Caco-2 (cell line): ENCODE measurements at regions of chr1 and their contacts with region 1.

Region 1: GRCh38 chr1:180154325-180155181 is at the start of gene QSOX1:
- DNase-seq: peak; percentile 83
- H3K4me3 ChIP-seq: peak within 1 kb of the TSS; percentile 79
- H3K4me3 Mint-ChIP-seq: peak within 1 kb of the TSS; percentile 92
- H3K27ac Mint-ChIP-seq: peak within 1 kb of the TSS; percentile 87
- H3K4me1 ChIP-seq: peaks cover 46% of the 10 kb centered on the region
- H3K4me1 Mint-ChIP-seq: peaks cover 36% of the 10 kb centered on the region
- H3K27me3 ChIP-seq: no peaks in the 10 kb centered on the region
- H3K27me3 Mint-ChIP-seq: peaks cover 10% of the 10 kb centered on the region
- CTCF ChIP-seq: peak in 1 of 2 experiments; percentile 33
- total RNA-seq, gene QSOX1: 12.1 and 17.0 TPM in 2 replicates

Region 2: DNA sequence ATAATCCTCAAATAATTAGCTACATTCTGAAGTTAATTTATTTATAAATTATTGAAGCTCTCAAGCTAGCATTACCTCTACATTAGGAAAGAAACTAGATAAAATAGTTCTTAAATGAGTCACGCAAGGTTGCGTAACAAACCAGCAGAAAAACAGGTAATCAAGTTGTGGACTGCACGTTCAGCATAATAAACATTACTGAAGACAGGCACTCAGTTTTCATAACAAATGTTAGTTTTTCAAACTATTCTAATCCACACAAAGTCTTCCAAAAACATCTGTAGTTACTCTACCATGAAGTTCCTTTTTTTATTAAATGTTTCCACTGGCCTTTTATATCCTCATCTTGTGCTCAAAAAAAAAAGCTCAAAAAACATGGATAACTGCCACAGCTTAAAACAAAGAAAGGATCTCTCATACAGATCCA is 278.3 kb before region 1 on chr1:
- CTCF ChIA-PET with region 1: interaction called, 3 read pairs
- POLR2A ChIA-PET with region 1: no interaction called
- intact Hi-C with region 1: loop called (anchors 5 kb)
- DNase-seq: peak in 1 of 2 experiments; percentile 68
- H3K4me3 ChIP-seq: peak overlapping the region; percentile 74
- H3K4me3 Mint-ChIP-seq: peak overlapping the region; percentile 84
- H3K27ac Mint-ChIP-seq: peak overlapping the region; percentile 74
- H3K4me1 ChIP-seq: peaks cover 45% of the 10 kb centered on the region
- H3K4me1 Mint-ChIP-seq: peaks cover 19% of the 10 kb centered on the region
- H3K27me3 ChIP-seq: no peaks in the 10 kb centered on the region
- H3K27me3 Mint-ChIP-seq: no peaks in the 10 kb centered on the region
- CTCF ChIP-seq: no peak

Region 3: GRCh38 chr1:180026556-180026955 is 128.0 kb before region 1 on chr1:
- CTCF ChIA-PET with region 1: no interaction called
- POLR2A ChIA-PET with region 1: no interaction called
- intact Hi-C with region 1: no loop called
- DNase-seq: no peak
- H3K4me3 ChIP-seq: no peak overlapping the region
- H3K4me3 Mint-ChIP-seq: no peak overlapping the region
- H3K27ac Mint-ChIP-seq: no peak overlapping the region
- H3K4me1 ChIP-seq: no peaks in the 10 kb centered on the region
- H3K4me1 Mint-ChIP-seq: no peaks in the 10 kb centered on the region
- H3K27me3 ChIP-seq: no peaks in the 10 kb centered on the region
- H3K27me3 Mint-ChIP-seq: no peaks in the 10 kb centered on the region
- CTCF ChIP-seq: no peak

Region 4: GRCh38 chr1:180131510-180131909 is 23.0 kb before region 1 on chr1:
- CTCF ChIA-PET with region 1: no interaction called
- POLR2A ChIA-PET with region 1: no interaction called
- intact Hi-C with region 1: loop called (anchors 2 kb)
- DNase-seq: no peak
- H3K4me3 ChIP-seq: no peak overlapping the region
- H3K4me3 Mint-ChIP-seq: no peak overlapping the region
- H3K27ac Mint-ChIP-seq: no peak overlapping the region
- H3K4me1 ChIP-seq: peaks cover 6% of the 10 kb centered on the region
- H3K4me1 Mint-ChIP-seq: peaks cover 3% of the 10 kb centered on the region
- H3K27me3 ChIP-seq: no peaks in the 10 kb centered on the region
- H3K27me3 Mint-ChIP-seq: peaks cover 4% of the 10 kb centered on the region
- CTCF ChIP-seq: no peak

Region 5: GRCh38 chr1:180168786-180169639 is 14.5 kb after region 1 on chr1:
- CTCF ChIA-PET with region 1: interaction called, 26 read pairs
- POLR2A ChIA-PET with region 1: interaction called, 5 read pairs
- intact Hi-C with region 1: loop called (anchors 1 kb)
- DNase-seq: peak; percentile 72 to 81
- H3K4me3 ChIP-seq: no peak overlapping the region
- H3K4me3 Mint-ChIP-seq: no peak overlapping the region
- H3K27ac Mint-ChIP-seq: no peak overlapping the region
- H3K4me1 ChIP-seq: peaks cover 21% of the 10 kb centered on the region
- H3K4me1 Mint-ChIP-seq: peaks cover 8% of the 10 kb centered on the region
- H3K27me3 ChIP-seq: no peaks in the 10 kb centered on the region
- H3K27me3 Mint-ChIP-seq: no peaks in the 10 kb centered on the region
- CTCF ChIP-seq: peak; percentile 72 to 75